IMR-90 (cell line): ENCODE measurements at regions of chr22 and their contacts with region 1.

Region 1: DNA sequence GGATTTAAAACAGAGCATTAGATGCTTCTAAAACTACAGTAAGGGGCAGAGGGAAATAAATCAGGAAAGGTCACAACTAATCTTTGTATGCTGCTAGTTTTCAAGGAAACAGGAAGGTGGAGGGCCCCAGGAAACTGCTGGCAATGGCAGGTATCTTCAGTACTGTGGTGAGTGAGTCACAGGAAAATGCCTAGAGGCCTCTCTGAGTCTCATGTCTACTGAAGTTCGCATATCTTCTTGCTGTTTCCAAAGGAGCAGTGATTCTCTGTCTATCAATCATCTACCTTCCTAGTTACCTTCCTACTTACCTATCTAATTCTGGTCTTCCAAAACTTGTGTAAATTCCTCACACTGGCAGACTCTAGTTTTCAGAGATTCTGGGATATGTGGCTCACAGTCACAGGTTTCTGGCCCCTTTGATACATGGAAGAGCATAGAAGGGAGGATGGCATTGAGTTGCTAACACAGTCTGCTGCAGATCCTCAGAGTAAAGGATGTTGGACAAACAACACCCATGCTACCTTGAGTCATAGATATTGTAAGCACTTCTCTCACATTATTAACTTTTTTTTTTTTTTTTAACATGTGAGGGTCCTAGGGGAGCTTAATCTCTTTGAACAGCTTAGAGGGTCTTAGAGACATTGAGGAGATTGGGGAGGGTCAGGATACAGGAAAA is 58.8 kb upstream of the SYN3 start:
- DNase-seq: no peak
- ATAC-seq: no peak
- H3K4me3 ChIP-seq: no peak overlapping the region
- H3K27ac ChIP-seq: no peak overlapping the region
- H3K4me1 ChIP-seq: no peaks in the 10 kb centered on the region
- H3K27me3 ChIP-seq: no peaks in the 10 kb centered on the region
- CTCF ChIP-seq: no peak
- POLR2A ChIP-seq: no peak
- RAD21 ChIP-seq: no peak

Region 2: GRCh38 chr22:33049119-33049729 is 67.8 kb before region 1 on chr22:
- CTCF ChIA-PET with region 1: no interaction called
- POLR2A ChIA-PET with region 1: no interaction called
- dilution Hi-C with region 1: no loop called
- in situ Hi-C with region 1: no loop called
- intact Hi-C with region 1: no loop called
- DNase-seq: peak; percentile 67
- ATAC-seq: peak; percentile 95
- H3K4me3 ChIP-seq: no peak overlapping the region
- H3K27ac ChIP-seq: no peak overlapping the region
- H3K4me1 ChIP-seq: no peaks in the 10 kb centered on the region
- H3K27me3 ChIP-seq: peaks cover 3% of the 10 kb centered on the region; the same call in 1 of the 2 replicates
- CTCF ChIP-seq: peak; percentile 78
- POLR2A ChIP-seq: no peak
- RAD21 ChIP-seq: peak; percentile 52

Region 3: GRCh38 chr22:33130473-33130872 is 13.5 kb after region 1 on chr22:
- CTCF ChIA-PET with region 1: no interaction called
- POLR2A ChIA-PET with region 1: interaction called, 15 read pairs
- dilution Hi-C with region 1: no loop called
- in situ Hi-C with region 1: no loop called
- intact Hi-C with region 1: no loop called
- DNase-seq: no peak
- ATAC-seq: no peak
- H3K4me3 ChIP-seq: no peak overlapping the region
- H3K27ac ChIP-seq: no peak overlapping the region
- H3K4me1 ChIP-seq: no peaks in the 10 kb centered on the region
- H3K27me3 ChIP-seq: no peaks in the 10 kb centered on the region
- CTCF ChIP-seq: no peak
- POLR2A ChIP-seq: no peak
- RAD21 ChIP-seq: no peak

Region 4: GRCh38 chr22:33194529-33195077 is 77.6 kb after region 1 on chr22:
- CTCF ChIA-PET with region 1: no interaction called
- POLR2A ChIA-PET with region 1: no interaction called
- dilution Hi-C with region 1: no loop called
- in situ Hi-C with region 1: no loop called
- intact Hi-C with region 1: no loop called
- DNase-seq: no peak
- ATAC-seq: no peak
- H3K4me3 ChIP-seq: no peak overlapping the region
- H3K27ac ChIP-seq: no peak overlapping the region
- H3K4me1 ChIP-seq: no peaks in the 10 kb centered on the region
- H3K27me3 ChIP-seq: no peaks in the 10 kb centered on the region
- CTCF ChIP-seq: no peak
- POLR2A ChIP-seq: no peak
- RAD21 ChIP-seq: no peak